ENCODE measurements at regions of chr19 and their contacts with region 1.

Region 1: GRCh38 chr19:18419195-18419698 is at the start of gene SSBP4:
- DNase-seq: peak; percentile 82
- ATAC-seq: peak; percentile 45
- H3K4me3 Mint-ChIP-seq: peak within 1 kb of the TSS; percentile 90
- H3K27ac Mint-ChIP-seq: peak within 1 kb of the TSS; percentile 80
- H3K4me1 Mint-ChIP-seq: peaks cover 79% of the 10 kb centered on the region
- H3K27me3 Mint-ChIP-seq: peaks cover 23% of the 10 kb centered on the region
- total RNA-seq, gene SSBP4: 71.7 to 79.3 TPM

Region 2: GRCh38 chr19:18291590-18292461 is 127.4 kb before region 1 on chr19:
- CTCF ChIA-PET with region 1: no interaction called
- POLR2A ChIA-PET with region 1: no interaction called
- intact Hi-C with region 1: loop called in 1 of 2 experiments (anchors 5 kb)
- DNase-seq: peak; percentile 96
- ATAC-seq: peak; percentile 38
- H3K4me3 Mint-ChIP-seq: peak overlapping the region; percentile 87
- H3K27ac Mint-ChIP-seq: peak overlapping the region; percentile 99
- H3K4me1 Mint-ChIP-seq: peaks cover 63% of the 10 kb centered on the region
- H3K27me3 Mint-ChIP-seq: no peaks in the 10 kb centered on the region

Region 3: DNA sequence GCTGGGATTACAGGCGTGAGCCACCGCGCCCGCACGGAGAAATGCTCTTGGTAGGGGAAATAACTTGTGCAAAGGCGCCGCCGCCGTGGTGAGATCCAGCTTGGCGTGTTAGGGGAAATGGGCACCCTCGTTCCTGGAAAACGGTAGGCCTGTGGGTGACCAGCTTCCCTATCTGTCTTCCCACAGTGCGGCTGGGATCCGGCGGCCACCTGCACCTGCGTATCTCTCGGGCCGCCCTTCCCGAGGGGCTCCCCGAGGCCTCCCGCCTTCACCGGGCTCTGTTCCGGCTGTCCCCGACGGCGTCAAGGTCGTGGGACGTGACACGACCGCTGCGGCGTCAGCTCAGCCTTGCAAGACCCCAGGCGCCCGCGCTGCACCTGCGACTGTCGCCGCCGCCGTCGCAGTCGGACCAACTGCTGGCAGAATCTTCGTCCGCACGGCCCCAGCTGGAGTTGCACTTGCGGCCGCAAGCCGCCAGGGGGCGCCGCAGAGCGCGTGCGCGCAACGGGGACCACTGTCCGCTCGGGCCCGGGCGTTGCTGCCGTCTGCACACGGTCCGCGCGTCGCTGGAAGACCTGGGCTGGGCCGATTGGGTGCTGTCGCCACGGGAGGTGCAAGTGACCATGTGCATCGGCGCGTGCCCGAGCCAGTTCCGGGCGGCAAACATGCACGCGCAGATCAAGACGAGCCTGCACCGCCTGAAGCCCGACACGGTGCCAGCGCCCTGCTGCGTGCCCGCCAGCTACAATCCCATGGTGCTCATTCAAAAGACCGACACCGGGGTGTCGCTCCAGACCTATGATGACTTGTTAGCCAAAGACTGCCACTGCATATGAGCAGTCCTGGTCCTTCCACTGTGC is 30.9 kb before region 1 on chr19:
- CTCF ChIA-PET with region 1: interaction called, 48 read pairs
- POLR2A ChIA-PET with region 1: no interaction called
- intact Hi-C with region 1: loop called in 1 of 2 experiments (anchors 5 kb)
- DNase-seq: peak; percentile 88
- ATAC-seq: peak; percentile 86
- H3K4me3 Mint-ChIP-seq: peak overlapping the region; percentile 67
- H3K27ac Mint-ChIP-seq: no peak overlapping the region
- H3K4me1 Mint-ChIP-seq: peaks cover 4% of the 10 kb centered on the region
- H3K27me3 Mint-ChIP-seq: peaks cover 45% of the 10 kb centered on the region

Region 4: DNA sequence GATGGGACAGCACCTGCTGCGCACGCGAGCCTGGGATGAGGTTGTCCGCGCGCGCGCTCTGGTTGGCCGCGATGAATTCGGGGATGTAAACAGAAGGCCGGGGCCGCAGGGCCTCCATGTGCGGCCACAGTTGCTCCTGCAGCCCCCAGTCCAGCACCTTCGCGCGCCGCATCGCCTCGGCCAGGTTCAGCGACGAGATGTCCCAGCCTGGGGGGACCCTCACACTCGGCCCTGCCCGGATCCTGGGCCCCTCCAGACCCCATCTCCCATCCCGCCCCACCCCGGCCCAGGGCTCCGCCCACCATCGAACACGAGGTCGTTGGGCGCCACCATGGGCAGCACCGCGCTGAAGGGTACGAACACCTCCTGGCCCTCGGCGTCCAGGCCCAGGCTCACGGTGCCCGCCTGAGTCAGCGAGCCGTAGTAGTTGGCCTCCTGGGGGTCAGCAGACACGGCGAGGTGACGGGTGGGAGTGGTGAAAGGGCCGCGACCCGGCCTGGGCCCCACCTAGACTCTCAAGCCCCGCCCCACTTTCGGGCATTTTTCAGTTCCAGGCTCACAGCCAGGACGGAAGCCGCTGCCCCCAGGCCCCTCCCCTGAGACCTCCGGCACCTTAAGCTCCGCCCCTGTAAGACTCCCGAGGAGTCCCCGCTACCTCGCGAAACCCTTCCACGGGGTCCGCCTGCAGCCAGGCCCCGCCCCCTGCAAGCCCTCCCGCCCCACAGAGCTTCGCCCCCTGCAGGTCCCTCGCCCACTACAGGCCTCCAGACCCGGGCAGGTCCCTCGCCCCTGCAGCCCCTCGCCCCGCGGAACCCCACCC is 17.6 kb after region 1 on chr19:
- CTCF ChIA-PET with region 1: interaction called, 7 read pairs
- POLR2A ChIA-PET with region 1: no interaction called
- intact Hi-C with region 1: loop called (anchors 1 to 2 kb)
- DNase-seq: peak; percentile 80
- ATAC-seq: peak; percentile 62
- H3K4me3 Mint-ChIP-seq: peak overlapping the region; percentile 63
- H3K27ac Mint-ChIP-seq: no peak overlapping the region
- H3K4me1 Mint-ChIP-seq: peaks cover 21% of the 10 kb centered on the region
- H3K27me3 Mint-ChIP-seq: no peaks in the 10 kb centered on the region

Measured in activated CD4-positive, alpha-beta T cell treated with anti-CD3 and anti-CD28 coated beads for 36 hours (primary cell).